Naive thymus-derived CD4-positive, alpha-beta T cell (primary cell): ENCODE measurements at regions of chr11 and their contacts with region 1.

Region 1: DNA sequence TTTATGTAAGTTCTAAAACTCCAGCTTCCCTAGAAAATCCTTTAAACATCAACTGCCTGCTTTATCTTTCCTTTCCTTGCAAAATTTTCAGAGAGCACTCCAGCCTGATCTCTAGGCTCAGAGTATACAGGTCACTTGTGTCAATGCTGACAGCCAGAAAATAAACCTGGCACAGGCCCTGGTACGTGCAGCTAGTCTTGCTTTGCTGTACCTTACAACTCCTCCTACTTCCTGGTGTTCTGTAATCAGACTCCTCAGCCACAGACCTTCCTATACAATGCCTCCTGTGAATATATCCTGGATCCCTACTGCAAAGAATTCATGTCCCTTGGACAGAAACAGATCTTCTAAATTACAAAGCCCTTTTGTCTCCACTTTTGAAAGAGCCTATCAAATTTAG is 24.2 kb upstream of the TMEM123 start:
- DNase-seq: peak in 5 of 9 donors; percentile 17 to 42 (median 34)
- ATAC-seq: peak; percentile 88
- H3K4me3 ChIP-seq: no peak overlapping the region
- H3K4me3 Mint-ChIP-seq: peak overlapping the region; percentile 51 to 83 (median 70)
- H3K27ac ChIP-seq: peak overlapping the region; percentile 46
- H3K27ac Mint-ChIP-seq: peak overlapping the region; percentile 63 to 96 (median 91)
- H3K4me1 ChIP-seq: peaks cover 11 to 39% of the 10 kb centered on the region in 2 donors
- H3K4me1 Mint-ChIP-seq: peaks cover 12 to 75% (median 63%) of the 10 kb centered on the region in 7 donors
- H3K27me3 ChIP-seq: no peaks in the 10 kb centered on the region
- H3K27me3 Mint-ChIP-seq: no peaks in the 10 kb centered on the region

Region 2: GRCh38 chr11:101775033-101775432 is 701.8 kb before region 1 on chr11:
- CTCF ChIA-PET with region 1: no interaction called
- POLR2A ChIA-PET with region 1: no interaction called
- intact Hi-C with region 1: no loop called
- DNase-seq: no peak
- ATAC-seq: no peak
- H3K4me3 ChIP-seq: no peak overlapping the region
- H3K4me3 Mint-ChIP-seq: no peak overlapping the region
- H3K27ac ChIP-seq: no peak overlapping the region
- H3K27ac Mint-ChIP-seq: no peak overlapping the region
- H3K4me1 ChIP-seq: no peaks in the 10 kb centered on the region
- H3K4me1 Mint-ChIP-seq: no peaks in the 10 kb centered on the region
- H3K27me3 ChIP-seq: no peaks in the 10 kb centered on the region
- H3K27me3 Mint-ChIP-seq: no peaks in the 10 kb centered on the region

Region 3: DNA sequence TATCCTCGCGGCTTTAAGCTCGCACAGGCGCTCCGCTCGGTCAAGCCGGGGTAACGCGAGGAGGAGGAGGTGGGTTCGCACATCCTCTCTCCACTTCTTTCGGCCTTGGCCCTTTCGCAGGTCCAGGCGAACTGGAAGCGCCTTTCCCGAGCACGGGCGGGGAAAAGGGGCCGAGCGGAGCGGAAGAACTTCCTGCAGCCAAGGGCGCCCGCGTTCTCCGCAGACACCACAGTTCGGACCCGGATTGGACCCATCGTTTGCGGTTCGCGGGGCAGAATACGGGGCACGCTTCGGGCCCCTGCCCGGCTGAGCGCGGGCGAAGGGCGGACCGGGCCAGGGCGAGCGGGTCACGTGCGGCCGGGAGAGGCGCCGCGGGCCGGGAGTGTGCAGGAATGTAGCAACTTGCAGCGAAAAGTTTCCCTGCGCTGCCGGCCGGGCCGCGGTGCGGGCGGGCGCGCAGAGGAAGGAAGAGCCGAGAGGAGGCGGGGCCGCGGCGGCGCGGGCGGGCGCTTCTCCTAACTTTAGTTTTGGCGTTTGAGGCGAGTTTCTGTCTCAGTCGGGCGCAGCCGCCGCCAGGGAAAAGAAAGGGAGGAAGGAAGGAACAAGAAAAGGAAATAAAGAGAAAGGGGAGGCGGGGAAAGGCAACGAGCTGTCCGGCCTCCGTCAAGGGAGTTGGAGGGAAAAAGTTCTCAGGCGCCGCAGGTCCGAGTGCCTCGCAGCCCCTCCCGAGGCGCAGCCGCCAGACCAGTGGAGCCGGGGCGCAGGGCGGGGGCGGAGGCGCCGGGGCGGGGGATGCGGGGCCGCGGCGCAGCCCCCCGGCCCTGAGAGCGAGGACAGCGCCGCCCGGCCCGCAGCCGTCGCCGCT is 366.7 kb before region 1 on chr11 and contains the start of gene YAP1:
- CTCF ChIA-PET with region 1: no interaction called
- POLR2A ChIA-PET with region 1: no interaction called
- intact Hi-C with region 1: loop called in 1 of 2 experiments (anchors 5 kb)
- DNase-seq: peak; percentile 26 to 70 (median 55)
- ATAC-seq: peak; percentile 85
- H3K4me3 ChIP-seq: peak within 1 kb of the TSS; percentile 69
- H3K4me3 Mint-ChIP-seq: peak within 1 kb of the TSS; percentile 88 to 98 (median 94)
- H3K27ac ChIP-seq: no peak within 1 kb of the TSS
- H3K27ac Mint-ChIP-seq: peak within 1 kb of the TSS in 3 of 9 donors; percentile 25 to 77 (median 65)
- H3K4me1 ChIP-seq: peaks cover 0 to 6% of the 10 kb centered on the region in 2 donors
- H3K4me1 Mint-ChIP-seq: peaks cover 5 to 18% (median 11%) of the 10 kb centered on the region in 7 donors
- H3K27me3 ChIP-seq: peaks cover 3% of the 10 kb centered on the region in 2 donors
- H3K27me3 Mint-ChIP-seq: peaks cover 26 to 64% (median 58%) of the 10 kb centered on the region in 5 donors
- total RNA-seq, gene YAP1: 0.15 TPM in 1 of 5 experiments, not detected in the others

Region 4: DNA sequence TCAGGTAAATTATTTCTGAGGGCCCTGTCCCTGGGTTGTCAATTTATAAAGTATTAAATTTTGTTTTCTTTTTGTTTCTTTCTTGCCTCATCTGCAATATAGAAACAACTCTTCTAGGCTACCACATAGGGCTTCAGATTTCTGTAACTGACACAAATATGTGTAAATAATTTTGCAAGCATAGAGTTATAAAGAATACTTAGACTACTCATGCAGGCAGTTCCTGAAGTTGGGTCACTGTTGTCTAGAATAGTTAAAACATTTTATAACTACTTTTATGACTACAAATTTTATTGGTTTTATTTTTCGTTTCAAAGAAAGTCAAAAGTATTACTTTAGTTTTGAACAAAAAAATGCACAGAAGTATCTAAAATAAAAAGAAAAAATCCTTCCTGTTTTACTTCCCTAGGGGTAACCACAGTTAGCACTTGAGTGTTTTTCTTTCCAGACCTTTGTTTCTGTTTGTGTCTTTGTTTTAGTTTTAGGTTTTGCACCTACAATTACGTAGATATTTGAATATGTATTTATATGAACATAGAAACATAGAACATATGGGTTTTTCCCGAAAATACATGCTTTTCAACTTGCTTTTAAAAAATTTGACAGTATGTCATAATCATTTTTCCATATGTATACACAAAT is 11.8 kb before region 1 on chr11:
- CTCF ChIA-PET with region 1: interaction called, 3 read pairs
- POLR2A ChIA-PET with region 1: interaction called, 11 read pairs
- intact Hi-C with region 1: loop called in 1 of 2 experiments (anchors 1 kb)
- DNase-seq: no peak
- ATAC-seq: peak; percentile 36
- H3K4me3 ChIP-seq: no peak overlapping the region
- H3K4me3 Mint-ChIP-seq: peak overlapping the region in 8 of 10 donors; percentile 14 to 76 (median 56)
- H3K27ac ChIP-seq: no peak overlapping the region
- H3K27ac Mint-ChIP-seq: peak overlapping the region in 8 of 9 donors; percentile 5 to 80 (median 54)
- H3K4me1 ChIP-seq: peaks cover 21 to 59% of the 10 kb centered on the region in 2 donors
- H3K4me1 Mint-ChIP-seq: peaks cover 48 to 86% (median 76%) of the 10 kb centered on the region in 7 donors
- H3K27me3 ChIP-seq: no peaks in the 10 kb centered on the region
- H3K27me3 Mint-ChIP-seq: no peaks in the 10 kb centered on the region